ENCODE measurements at regions of chr6 and their contacts with region 1.

Region 1: GRCh38 chr6:43269273-43270007 is 26.2 kb downstream of the TTBK1 start:
- DNase-seq: peak; percentile 58
- ATAC-seq: peak; percentile 22
- H3K4me3 ChIP-seq: peak overlapping the region in 4 of 5 experiments; percentile 36 to 54 (median 48)
- H3K4me3 Mint-ChIP-seq: peak overlapping the region; percentile 80
- H3K27ac ChIP-seq: no peak overlapping the region
- H3K27ac Mint-ChIP-seq: peak overlapping the region; percentile 37
- H3K4me1 ChIP-seq: peaks cover 26 to 34% of the 10 kb centered on the region in 2 donors
- H3K4me1 Mint-ChIP-seq: peaks cover 44% of the 10 kb centered on the region
- H3K27me3 ChIP-seq: peaks cover 0 to 11% (median 5%) of the 10 kb centered on the region in 4 experiments
- H3K27me3 Mint-ChIP-seq: peaks cover 10% of the 10 kb centered on the region
- CTCF ChIP-seq: no peak

Region 2: DNA sequence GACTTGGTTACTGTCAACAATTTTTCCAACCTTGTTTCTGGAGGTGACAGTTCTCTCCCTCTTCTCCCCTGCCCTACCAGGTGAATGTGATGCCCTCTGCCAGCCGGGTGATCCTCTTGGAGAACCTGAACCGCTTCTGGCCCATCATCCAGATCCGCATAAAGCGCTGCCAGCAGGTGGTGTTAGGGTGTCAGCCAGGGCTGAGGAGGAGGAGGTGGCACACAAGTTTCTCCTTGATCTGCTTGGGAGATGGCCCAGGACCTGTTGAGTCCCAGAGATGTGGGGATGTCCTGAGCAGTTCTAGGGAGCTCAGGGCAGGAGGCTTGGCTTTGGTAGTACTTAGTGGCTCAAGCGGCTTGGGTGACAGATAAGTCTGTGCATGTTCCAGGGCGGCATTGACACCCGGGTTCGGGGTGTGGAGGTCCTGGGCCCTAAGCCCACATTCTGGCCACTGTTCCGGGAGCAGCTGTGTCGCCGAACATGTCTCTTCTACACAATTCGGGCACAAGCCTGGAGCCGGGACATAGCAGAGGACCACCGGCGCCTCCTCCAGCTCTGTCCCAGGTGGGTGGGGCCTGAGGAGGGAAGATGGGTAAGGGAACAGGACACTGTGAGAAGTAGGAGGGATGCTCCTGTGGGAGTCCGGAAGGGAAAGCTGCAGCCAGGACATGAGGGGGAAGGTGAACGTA is 66.3 kb before region 1 on chr6:
- CTCF ChIA-PET with region 1: no interaction called
- POLR2A ChIA-PET with region 1: no interaction called
- intact Hi-C with region 1: no loop called
- DNase-seq: no peak
- ATAC-seq: no peak
- H3K4me3 ChIP-seq: no peak overlapping the region
- H3K4me3 Mint-ChIP-seq: no peak overlapping the region
- H3K27ac ChIP-seq: no peak overlapping the region
- H3K27ac Mint-ChIP-seq: no peak overlapping the region
- H3K4me1 ChIP-seq: no peaks in the 10 kb centered on the region
- H3K4me1 Mint-ChIP-seq: no peaks in the 10 kb centered on the region
- H3K27me3 ChIP-seq: no peaks in the 10 kb centered on the region
- H3K27me3 Mint-ChIP-seq: no peaks in the 10 kb centered on the region
- CTCF ChIP-seq: no peak

Region 3: DNA sequence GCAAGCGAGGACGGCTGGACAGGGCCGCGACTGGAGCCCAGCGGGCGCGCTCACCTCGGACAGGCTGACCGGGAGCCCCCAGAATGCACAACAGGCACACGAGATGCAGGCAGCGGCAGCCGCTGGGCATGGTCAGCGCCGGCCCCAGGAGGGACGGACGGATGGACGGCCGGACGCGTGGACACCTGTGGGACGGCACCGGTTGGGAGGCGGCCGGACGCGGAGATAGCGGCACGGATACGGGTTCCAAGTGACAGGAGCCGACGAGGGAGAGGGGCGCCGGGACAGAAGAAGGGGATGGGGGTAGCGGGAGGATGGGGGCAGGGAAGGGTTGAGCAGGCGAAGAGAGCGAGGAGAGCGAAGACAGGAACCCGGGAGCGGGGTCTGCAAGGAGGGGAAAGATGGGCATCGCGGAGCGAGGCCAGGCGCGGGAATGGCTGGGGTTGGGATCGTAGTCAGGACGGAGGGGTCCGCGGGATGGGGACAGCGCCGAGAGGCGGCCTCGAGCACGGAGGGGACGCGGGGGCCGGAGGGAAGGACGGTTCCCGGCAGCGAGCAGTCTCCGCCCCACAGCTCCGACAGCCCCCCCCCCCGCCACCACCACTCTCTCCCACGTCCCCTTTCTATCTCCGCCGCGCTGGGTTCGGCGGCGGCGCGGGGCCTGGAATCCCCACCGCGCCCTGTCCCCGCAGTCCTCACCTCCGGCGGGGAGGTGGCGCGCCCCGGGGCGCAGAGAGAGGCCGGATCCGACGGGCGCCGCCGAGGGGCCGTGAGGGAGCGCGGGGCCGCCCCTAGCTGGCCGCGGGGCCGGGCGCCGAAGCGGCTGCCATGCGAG is 185.5 kb after region 1 on chr6:
- CTCF ChIA-PET with region 1: no interaction called
- POLR2A ChIA-PET with region 1: no interaction called
- intact Hi-C with region 1: loop called (anchors 5 kb)
- DNase-seq: peak; percentile 73
- ATAC-seq: peak; percentile 53
- H3K4me3 ChIP-seq: peak overlapping the region; percentile 18 to 67 (median 61)
- H3K4me3 Mint-ChIP-seq: peak overlapping the region; percentile 89
- H3K27ac ChIP-seq: no peak overlapping the region
- H3K27ac Mint-ChIP-seq: peak overlapping the region; percentile 63
- H3K4me1 ChIP-seq: peaks cover 7 to 12% of the 10 kb centered on the region in 2 donors
- H3K4me1 Mint-ChIP-seq: peaks cover 14% of the 10 kb centered on the region
- H3K27me3 ChIP-seq: peaks cover 0 to 4% (median 2%) of the 10 kb centered on the region in 4 experiments
- H3K27me3 Mint-ChIP-seq: peaks cover 3% of the 10 kb centered on the region
- CTCF ChIP-seq: peak; percentile 90

Measured in B cell (primary cell).